Brain microvascular endothelial cell (primary cell): ENCODE measurements at regions of chr17 and their contacts with region 1.

Region 1: GRCh38 chr17:76506408-76507349 is 5.5 kb upstream of the RHBDF2 start:
- DNase-seq: peak; percentile 49
- H3K4me3 ChIP-seq: no peak overlapping the region
- H3K27ac ChIP-seq: no peak overlapping the region
- H3K27me3 ChIP-seq: no peaks in the 10 kb centered on the region
- CTCF ChIP-seq: peak; percentile 90

Region 2: GRCh38 chr17:76461765-76462555 is 44.7 kb before region 1 on chr17:
- in situ Hi-C with region 1: loop called (anchors 5 kb)
- DNase-seq: no peak
- H3K4me3 ChIP-seq: no peak overlapping the region
- H3K27ac ChIP-seq: no peak overlapping the region
- H3K27me3 ChIP-seq: no peaks in the 10 kb centered on the region
- CTCF ChIP-seq: no peak